Activated T-helper 2 cell treated with anti-CD3 and anti-CD28 coated beads, Interferon-gamma antibody, Interleukin-2, Interleukin-4, amounts not matched to agents 10 μg/mL and 5 μg/mL and 100 μg/mL, durations not matched to agents 14 hours and 24 hours and 36 hours (primary cell): ENCODE measurements at regions of chr11 and their contacts with region 1.

Region 1: DNA sequence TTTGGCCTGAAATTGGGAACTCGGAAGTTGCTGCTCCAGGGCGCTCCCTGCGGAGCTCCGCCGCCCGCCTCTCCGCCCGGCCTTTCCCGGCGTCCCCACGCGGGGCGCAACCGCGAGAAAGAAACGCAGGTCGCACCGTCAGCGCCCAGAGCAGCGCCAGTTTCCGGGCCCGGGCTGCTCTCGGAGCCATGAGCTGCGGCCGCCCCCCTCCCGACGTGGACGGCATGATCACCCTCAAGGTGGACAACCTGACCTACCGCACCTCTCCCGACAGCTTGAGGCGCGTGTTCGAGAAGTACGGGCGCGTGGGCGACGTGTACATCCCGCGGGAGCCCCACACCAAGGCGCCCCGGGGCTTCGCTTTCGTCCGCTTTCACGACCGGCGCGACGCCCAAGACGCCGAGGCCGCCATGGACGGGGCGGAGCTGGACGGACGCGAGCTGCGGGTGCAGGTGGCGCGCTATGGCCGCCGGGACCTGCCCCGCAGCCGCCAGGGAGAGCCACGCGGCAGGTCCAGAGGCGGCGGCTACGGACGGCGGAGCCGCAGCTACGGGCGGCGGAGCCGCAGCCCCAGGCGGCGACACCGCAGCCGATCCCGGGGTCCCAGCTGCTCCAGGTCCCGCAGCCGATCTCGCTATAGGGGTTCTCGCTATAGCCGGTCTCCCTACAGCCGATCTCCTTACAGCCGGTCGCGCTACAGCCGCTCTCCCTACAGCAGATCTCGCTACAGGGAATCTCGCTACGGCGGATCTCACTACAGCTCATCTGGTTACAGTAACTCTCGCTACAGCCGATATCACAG is 521 bp downstream of the SRSF8 start:
- DNase-seq: peak; percentile 70
- H3K4me3 Mint-ChIP-seq: peak overlapping the region; percentile 91
- H3K27ac Mint-ChIP-seq: peak overlapping the region; percentile 93
- H3K4me1 Mint-ChIP-seq: peaks cover 18% of the 10 kb centered on the region
- H3K27me3 Mint-ChIP-seq: peaks cover 16% of the 10 kb centered on the region

Region 2: GRCh38 chr11:94602430-94603372 is 464.5 kb before region 1 on chr11:
- intact Hi-C with region 1: no loop called
- DNase-seq: peak; percentile 18
- H3K4me3 Mint-ChIP-seq: no peak overlapping the region
- H3K27ac Mint-ChIP-seq: no peak overlapping the region
- H3K4me1 Mint-ChIP-seq: peaks cover 4% of the 10 kb centered on the region
- H3K27me3 Mint-ChIP-seq: peaks cover 2% of the 10 kb centered on the region

Region 3: GRCh38 chr11:94786264-94787126 is 280.7 kb before region 1 on chr11:
- intact Hi-C with region 1: loop called (anchors 10 kb)
- DNase-seq: no peak
- H3K4me3 Mint-ChIP-seq: no peak overlapping the region
- H3K27ac Mint-ChIP-seq: no peak overlapping the region
- H3K4me1 Mint-ChIP-seq: peaks cover 3% of the 10 kb centered on the region
- H3K27me3 Mint-ChIP-seq: peaks cover 17% of the 10 kb centered on the region

Region 4: DNA sequence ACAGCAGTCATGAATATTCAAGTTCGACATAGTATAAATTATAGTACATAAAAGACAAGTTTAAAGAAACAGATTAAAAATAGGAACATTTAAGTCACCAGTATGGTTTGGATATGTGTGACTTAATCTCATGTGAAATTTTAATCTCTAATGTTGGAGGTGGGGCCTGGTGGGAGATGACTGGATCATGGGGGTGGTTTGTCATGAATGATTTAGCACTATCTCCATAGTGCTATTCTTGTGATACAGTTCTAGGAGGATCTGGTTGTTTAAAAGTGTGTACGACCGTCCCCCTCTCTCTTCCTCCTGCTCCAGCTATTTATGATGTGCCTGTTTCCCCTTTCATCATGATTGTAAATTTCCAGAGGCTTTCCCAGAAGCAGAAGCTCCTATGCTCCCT is 38.9 kb before region 1 on chr11:
- intact Hi-C with region 1: no loop called
- DNase-seq: no peak
- H3K4me3 Mint-ChIP-seq: no peak overlapping the region
- H3K27ac Mint-ChIP-seq: no peak overlapping the region
- H3K4me1 Mint-ChIP-seq: no peaks in the 10 kb centered on the region
- H3K27me3 Mint-ChIP-seq: peaks cover 8% of the 10 kb centered on the region

Region 5: GRCh38 chr11:95089620-95090542 is 22.6 kb after region 1 on chr11 and contains the start of gene ENDOD1:
- intact Hi-C with region 1: loop called (anchors 1 kb)
- DNase-seq: peak; percentile 85
- H3K4me3 Mint-ChIP-seq: peak within 1 kb of the TSS; percentile 88
- H3K27ac Mint-ChIP-seq: peak within 1 kb of the TSS; percentile 95
- H3K4me1 Mint-ChIP-seq: peaks cover 66% of the 10 kb centered on the region
- H3K27me3 Mint-ChIP-seq: no peaks in the 10 kb centered on the region
- total RNA-seq, gene ENDOD1: 33.7 and 34.9 TPM in 2 replicates

Region 6: DNA sequence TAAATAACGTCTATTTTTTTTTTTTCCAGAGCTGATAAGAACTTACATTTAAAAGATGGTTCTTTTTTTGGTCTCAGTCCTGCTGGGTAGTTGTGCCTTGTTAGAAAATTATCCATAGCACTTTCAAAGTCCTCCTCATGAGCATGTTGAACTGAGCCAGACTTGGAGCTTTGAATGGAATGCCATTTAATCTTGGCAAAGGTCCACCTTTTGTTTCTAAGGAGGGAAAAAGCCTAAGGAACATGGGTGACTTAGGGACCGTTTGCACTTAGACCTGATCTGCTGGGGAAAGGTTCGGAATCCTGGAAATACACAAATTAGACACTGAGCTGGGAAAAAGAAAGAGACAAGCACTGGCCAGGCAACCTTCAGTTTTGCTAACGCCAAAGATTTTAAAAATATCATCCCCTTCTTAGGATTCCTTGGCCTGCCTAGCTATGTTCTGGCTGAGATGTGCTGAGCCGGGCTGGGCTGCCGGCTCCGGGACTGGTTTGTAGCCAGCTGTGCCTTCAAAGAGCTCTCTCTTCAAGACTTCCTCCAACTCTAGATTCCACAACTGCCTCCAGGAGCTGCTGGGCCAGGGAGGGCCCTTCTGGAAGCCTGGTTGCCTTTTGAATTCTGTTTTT is 89.8 kb after region 1 on chr11:
- intact Hi-C with region 1: no loop called
- DNase-seq: no peak
- H3K4me3 Mint-ChIP-seq: no peak overlapping the region
- H3K27ac Mint-ChIP-seq: no peak overlapping the region
- H3K4me1 Mint-ChIP-seq: peaks cover 40% of the 10 kb centered on the region
- H3K27me3 Mint-ChIP-seq: no peaks in the 10 kb centered on the region

Region 7: GRCh38 chr11:95345651-95346050 is 278.4 kb after region 1 on chr11:
- intact Hi-C with region 1: loop called (anchors 10 kb)
- DNase-seq: no peak
- H3K4me3 Mint-ChIP-seq: no peak overlapping the region
- H3K27ac Mint-ChIP-seq: peak overlapping the region; percentile 24
- H3K4me1 Mint-ChIP-seq: peaks cover 35% of the 10 kb centered on the region
- H3K27me3 Mint-ChIP-seq: peaks cover 4% of the 10 kb centered on the region

Region 8: DNA sequence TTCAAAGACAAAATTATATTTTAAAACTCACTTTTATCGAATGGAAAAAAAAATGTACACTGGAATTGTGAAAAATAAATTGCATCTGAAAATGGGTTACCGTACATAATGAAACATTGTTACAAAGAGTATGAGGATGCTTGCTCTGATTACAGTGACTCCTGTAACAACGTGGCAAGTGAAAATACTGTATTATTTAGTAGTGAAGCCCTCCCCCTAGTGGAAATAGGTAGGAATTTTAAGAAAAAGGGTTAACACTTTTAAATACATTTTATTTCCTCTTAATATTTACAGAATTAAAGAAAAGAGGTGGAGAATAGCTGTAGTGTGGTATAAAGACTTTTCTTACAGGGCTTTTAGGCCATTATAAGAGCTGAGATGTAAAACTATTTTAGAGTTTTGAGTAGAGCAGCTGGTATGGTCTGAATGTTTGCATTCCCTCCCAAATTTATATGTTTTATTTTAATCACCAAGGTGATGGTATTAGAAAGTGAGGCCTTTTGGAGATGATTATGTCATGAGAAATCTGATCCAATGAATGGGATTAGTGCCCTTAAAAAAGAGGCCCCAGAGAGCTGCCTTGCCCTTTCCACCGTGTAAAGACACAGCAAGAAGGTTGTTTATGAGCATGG is 697.1 kb after region 1 on chr11:
- intact Hi-C with region 1: loop called (anchors 1 kb)
- DNase-seq: no peak
- H3K4me3 Mint-ChIP-seq: no peak overlapping the region
- H3K27ac Mint-ChIP-seq: no peak overlapping the region
- H3K4me1 Mint-ChIP-seq: peaks cover 15% of the 10 kb centered on the region
- H3K27me3 Mint-ChIP-seq: no peaks in the 10 kb centered on the region